ENCODE measurements at regions of chr11 and their contacts with region 1.

Region 1: DNA sequence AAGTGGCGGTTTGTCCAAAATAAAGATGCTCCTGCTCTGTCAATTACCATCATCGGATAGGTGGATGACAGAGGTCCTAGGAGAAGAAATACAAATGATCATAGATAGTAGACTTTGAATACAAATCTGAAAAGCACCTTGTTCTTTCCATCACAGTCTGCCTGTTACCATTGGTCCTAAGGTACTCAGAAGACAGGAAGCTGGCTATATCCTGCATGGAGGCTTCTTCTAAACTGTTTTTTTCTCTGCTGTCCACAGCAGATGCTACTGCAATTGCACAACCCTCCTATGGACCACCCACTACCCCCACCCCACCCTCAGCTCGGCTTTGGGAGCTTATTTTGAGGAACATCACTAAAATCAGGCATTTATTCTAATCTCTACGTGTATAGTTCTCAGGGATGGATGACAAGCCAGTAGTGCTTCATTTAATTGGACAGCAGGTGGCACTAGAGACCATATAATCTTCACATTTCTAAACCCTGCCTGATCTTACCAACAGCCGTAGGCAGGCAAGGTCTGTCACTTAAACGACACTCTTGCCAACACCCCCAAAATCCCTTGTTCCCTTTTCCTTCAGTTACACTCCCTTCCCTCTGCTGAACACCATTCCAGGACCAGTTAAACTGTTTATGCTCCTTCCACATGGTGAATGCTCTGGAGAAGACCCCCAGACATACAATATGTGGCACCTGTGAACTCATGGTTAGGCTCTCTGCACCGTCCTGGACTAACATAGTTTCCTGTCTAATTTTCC is 6.6 kb upstream of the PTS start:
- DNase-seq: peak; percentile 87
- ATAC-seq: peak; percentile 99
- H3K4me3 ChIP-seq: no peak overlapping the region
- H3K4me3 Mint-ChIP-seq: no peak overlapping the region
- H3K27ac ChIP-seq: no peak overlapping the region
- H3K27ac Mint-ChIP-seq: no peak overlapping the region
- H3K4me1 ChIP-seq: peaks cover 0 to 6% of the 10 kb centered on the region in 2 donors
- H3K4me1 Mint-ChIP-seq: peaks cover 3% of the 10 kb centered on the region
- H3K27me3 ChIP-seq: no peaks in the 10 kb centered on the region
- H3K27me3 Mint-ChIP-seq: no peaks in the 10 kb centered on the region
- CTCF ChIP-seq: peak; percentile 78

Region 2: DNA sequence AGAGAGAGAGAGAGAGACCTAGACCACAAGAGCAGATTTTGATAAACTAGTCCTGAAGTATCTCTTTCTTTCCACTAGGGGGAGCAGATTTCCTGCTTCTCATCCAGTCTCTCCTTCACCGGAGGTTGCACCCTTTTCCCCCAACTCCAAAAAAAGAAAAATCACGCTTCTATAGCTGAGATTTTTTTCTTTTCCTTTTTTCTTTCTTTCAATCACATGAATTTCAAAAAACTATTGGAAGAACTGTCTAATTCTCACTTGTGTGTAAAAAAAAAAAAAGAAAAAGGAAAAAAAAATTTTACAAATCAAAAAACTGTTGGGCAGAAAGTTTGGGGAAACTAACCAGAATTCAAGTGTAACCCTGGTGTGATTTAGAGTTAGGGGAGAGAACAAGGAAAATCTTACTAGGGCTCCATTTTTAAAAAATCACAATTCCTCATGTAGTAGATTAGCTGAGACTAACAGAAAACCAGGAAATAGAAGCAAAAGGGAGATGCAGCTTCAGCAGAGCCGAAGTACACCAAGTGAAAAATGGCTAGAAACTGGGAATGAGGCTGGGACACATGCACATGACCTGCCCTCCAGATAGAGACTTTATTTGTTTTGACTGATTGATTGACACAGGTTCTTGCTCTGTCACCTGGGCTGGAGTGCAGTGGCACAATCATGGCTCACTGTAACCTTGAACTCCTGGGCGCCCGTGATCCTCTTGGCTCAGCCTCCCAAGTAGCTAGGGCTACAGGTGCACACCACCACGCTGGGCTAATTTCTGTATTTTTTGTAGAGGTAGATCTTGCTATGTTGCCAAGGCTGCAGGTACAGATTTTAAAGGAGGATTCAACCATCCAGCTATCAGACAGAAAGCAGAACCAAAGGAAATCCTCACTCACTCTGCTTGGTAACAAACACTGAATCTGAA is 105.9 kb before region 1 on chr11:
- CTCF ChIA-PET with region 1: interaction called, 3 read pairs
- POLR2A ChIA-PET with region 1: no interaction called
- intact Hi-C with region 1: loop called (anchors 5 kb)
- DNase-seq: peak; percentile 53
- ATAC-seq: peak; percentile 68
- H3K4me3 ChIP-seq: no peak overlapping the region
- H3K4me3 Mint-ChIP-seq: no peak overlapping the region
- H3K27ac ChIP-seq: no peak overlapping the region
- H3K27ac Mint-ChIP-seq: no peak overlapping the region
- H3K4me1 ChIP-seq: no peaks in the 10 kb centered on the region
- H3K4me1 Mint-ChIP-seq: no peaks in the 10 kb centered on the region
- H3K27me3 ChIP-seq: no peaks in the 10 kb centered on the region
- H3K27me3 Mint-ChIP-seq: no peaks in the 10 kb centered on the region
- CTCF ChIP-seq: peak; percentile 83

Region 3: DNA sequence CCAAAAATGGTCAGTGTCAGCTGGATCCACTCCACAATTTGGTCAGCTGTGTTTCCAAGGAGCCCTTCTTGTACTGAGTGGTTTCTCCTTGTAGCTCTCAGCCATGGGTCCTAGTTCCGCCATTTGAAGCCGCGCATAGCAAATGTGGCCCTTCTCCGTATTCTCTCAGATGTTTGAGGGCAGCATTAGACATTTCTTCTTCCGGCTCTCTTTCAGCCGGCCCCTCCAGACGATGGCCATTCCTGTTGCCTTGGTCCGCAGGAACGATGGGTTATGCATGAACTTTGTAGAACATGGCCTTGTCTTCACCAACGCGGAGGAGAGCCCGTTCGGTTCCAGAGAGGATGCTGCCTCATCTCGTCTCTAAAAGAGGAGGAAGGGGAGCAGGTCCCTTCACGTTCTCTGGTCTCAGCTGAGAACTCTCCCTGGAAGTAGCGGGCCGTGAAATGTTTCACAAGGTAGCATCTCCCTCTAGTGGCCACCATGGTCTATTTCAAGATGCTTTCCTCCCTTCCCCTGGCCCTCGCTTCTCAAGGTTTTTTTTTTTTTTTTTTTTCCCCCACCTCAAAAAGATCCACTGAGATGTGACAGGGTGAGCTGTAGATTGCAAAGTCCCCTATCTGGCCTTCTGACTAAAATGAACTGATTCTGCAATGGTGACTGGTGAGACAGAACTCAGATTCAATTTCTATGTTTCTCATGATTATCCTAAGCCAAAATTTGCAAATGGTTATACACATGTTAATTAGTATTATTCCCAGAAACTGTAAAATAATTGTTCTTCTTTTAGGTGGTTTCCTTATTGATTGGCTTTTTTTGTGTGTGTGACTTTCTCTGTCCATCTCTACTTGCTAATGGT is 60.8 kb after region 1 on chr11:
- CTCF ChIA-PET with region 1: interaction called, 471 read pairs
- POLR2A ChIA-PET with region 1: interaction called, 5 read pairs
- intact Hi-C with region 1: loop called (anchors 1 kb)
- DNase-seq: peak; percentile 87
- ATAC-seq: peak; percentile 93
- H3K4me3 ChIP-seq: peak overlapping the region; percentile 59 to 80 (median 69)
- H3K4me3 Mint-ChIP-seq: peak overlapping the region; percentile 98
- H3K27ac ChIP-seq: peak overlapping the region in 1 of 2 donors; percentile 20
- H3K27ac Mint-ChIP-seq: peak overlapping the region; percentile 87
- H3K4me1 ChIP-seq: peaks cover 7 to 15% of the 10 kb centered on the region in 2 donors
- H3K4me1 Mint-ChIP-seq: peaks cover 18% of the 10 kb centered on the region
- H3K27me3 ChIP-seq: no peaks in the 10 kb centered on the region
- H3K27me3 Mint-ChIP-seq: no peaks in the 10 kb centered on the region
- CTCF ChIP-seq: peak; percentile 64

Region 4: DNA sequence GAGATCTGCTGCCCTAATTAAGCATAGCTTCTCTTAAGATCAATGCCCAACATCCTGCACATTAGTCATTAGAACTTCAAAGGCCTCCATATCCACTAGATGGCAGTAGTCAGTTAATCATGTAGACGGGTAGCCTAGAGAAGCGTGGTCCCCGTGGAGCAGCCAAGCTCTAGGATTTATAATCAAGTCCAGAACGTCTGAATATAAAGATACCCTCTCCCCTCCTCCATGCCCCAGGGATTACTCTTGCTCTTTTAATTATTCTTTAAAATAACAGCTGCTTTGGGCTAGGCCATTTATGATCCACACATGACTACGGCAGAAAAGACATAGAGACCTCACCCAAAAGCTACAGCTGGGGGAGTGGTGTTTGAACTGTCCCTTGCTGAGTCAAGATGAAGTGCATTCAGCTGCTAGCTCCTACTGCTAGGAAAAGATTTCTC is 368.6 kb after region 1 on chr11:
- CTCF ChIA-PET with region 1: interaction called, 6 read pairs
- POLR2A ChIA-PET with region 1: no interaction called
- intact Hi-C with region 1: loop called (anchors 1 kb)
- DNase-seq: peak; percentile 60
- ATAC-seq: peak; percentile 47
- H3K4me3 ChIP-seq: no peak overlapping the region
- H3K4me3 Mint-ChIP-seq: no peak overlapping the region
- H3K27ac ChIP-seq: no peak overlapping the region
- H3K27ac Mint-ChIP-seq: no peak overlapping the region
- H3K4me1 ChIP-seq: no peaks in the 10 kb centered on the region
- H3K4me1 Mint-ChIP-seq: peaks cover 2% of the 10 kb centered on the region
- H3K27me3 ChIP-seq: peaks cover 0 to 2% (median 1%) of the 10 kb centered on the region in 4 experiments
- H3K27me3 Mint-ChIP-seq: peaks cover 10% of the 10 kb centered on the region
- CTCF ChIP-seq: peak; percentile 75

Region 5: GRCh38 chr11:113034576-113034975 is 814.9 kb after region 1 on chr11:
- CTCF ChIA-PET with region 1: no interaction called
- POLR2A ChIA-PET with region 1: no interaction called
- intact Hi-C with region 1: no loop called
- DNase-seq: no peak
- ATAC-seq: no peak
- H3K4me3 ChIP-seq: no peak overlapping the region
- H3K4me3 Mint-ChIP-seq: no peak overlapping the region
- H3K27ac ChIP-seq: no peak overlapping the region
- H3K27ac Mint-ChIP-seq: no peak overlapping the region
- H3K4me1 ChIP-seq: no peaks in the 10 kb centered on the region
- H3K4me1 Mint-ChIP-seq: no peaks in the 10 kb centered on the region
- H3K27me3 ChIP-seq: no peaks in the 10 kb centered on the region
- H3K27me3 Mint-ChIP-seq: no peaks in the 10 kb centered on the region
- CTCF ChIP-seq: no peak

Region 6: GRCh38 chr11:113113801-113114706 is 894.4 kb after region 1 on chr11:
- CTCF ChIA-PET with region 1: no interaction called
- POLR2A ChIA-PET with region 1: no interaction called
- intact Hi-C with region 1: loop called (anchors 5 kb)
- DNase-seq: no peak
- ATAC-seq: no peak
- H3K4me3 ChIP-seq: no peak overlapping the region
- H3K4me3 Mint-ChIP-seq: no peak overlapping the region
- H3K27ac ChIP-seq: no peak overlapping the region
- H3K27ac Mint-ChIP-seq: no peak overlapping the region
- H3K4me1 ChIP-seq: no peaks in the 10 kb centered on the region
- H3K4me1 Mint-ChIP-seq: no peaks in the 10 kb centered on the region
- H3K27me3 ChIP-seq: peaks cover 0 to 5% (median 0%) of the 10 kb centered on the region in 4 experiments
- H3K27me3 Mint-ChIP-seq: peaks cover 21% of the 10 kb centered on the region
- CTCF ChIP-seq: no peak

Region 7: GRCh38 chr11:113289431-113290187 is 1070.0 kb after region 1 on chr11:
- CTCF ChIA-PET with region 1: interaction called, 31 read pairs
- POLR2A ChIA-PET with region 1: no interaction called
- intact Hi-C with region 1: no loop called
- DNase-seq: peak; percentile 78
- ATAC-seq: peak; percentile 98
- H3K4me3 ChIP-seq: no peak overlapping the region
- H3K4me3 Mint-ChIP-seq: no peak overlapping the region
- H3K27ac ChIP-seq: no peak overlapping the region
- H3K27ac Mint-ChIP-seq: no peak overlapping the region
- H3K4me1 ChIP-seq: peaks cover 0 to 5% of the 10 kb centered on the region in 2 donors
- H3K4me1 Mint-ChIP-seq: peaks cover 4% of the 10 kb centered on the region
- H3K27me3 ChIP-seq: peaks cover 0 to 8% (median 0%) of the 10 kb centered on the region in 4 experiments
- H3K27me3 Mint-ChIP-seq: peaks cover 22% of the 10 kb centered on the region
- CTCF ChIP-seq: peak; percentile 87